Dendritic cell treated with granulocyte-macrophage colony-stimulating factor and Interleukin-4, amounts not matched to agents 40 ng/mL and 50 ng/mL, for 4 days (primary cell): ENCODE measurements at regions of chr9 and their contacts with region 1.

Region 1: GRCh38 chr9:132169672-132170392 is 8.0 kb downstream of the NTNG2 start:
- H3K4me3 Mint-ChIP-seq: no peak overlapping the region
- H3K27ac Mint-ChIP-seq: no peak overlapping the region
- H3K4me1 Mint-ChIP-seq: no peaks in the 10 kb centered on the region
- H3K27me3 Mint-ChIP-seq: peaks cover 40% of the 10 kb centered on the region

Region 2: GRCh38 chr9:132235946-132236661 is 66.3 kb after region 1 on chr9:
- intact Hi-C with region 1: loop called (anchors 1 kb)
- H3K4me3 Mint-ChIP-seq: no peak overlapping the region
- H3K27ac Mint-ChIP-seq: no peak overlapping the region
- H3K4me1 Mint-ChIP-seq: peaks cover 36% of the 10 kb centered on the region
- H3K27me3 Mint-ChIP-seq: peaks cover 44% of the 10 kb centered on the region